ENCODE measurements at regions of chr9 and their contacts with region 1.

Region 1: GRCh38 chr9:9938432-9938831 is 674.4 kb downstream of the PTPRD start:
- DNase-seq: no peak
- H3K4me3 ChIP-seq: no peak overlapping the region
- H3K27ac ChIP-seq: no peak overlapping the region
- H3K4me1 ChIP-seq: peaks cover 0 to 4% (median 0%) of the 10 kb centered on the region in 4 donors
- H3K27me3 ChIP-seq: no peaks in the 10 kb centered on the region
- CTCF ChIP-seq: no peak
- EP300 ChIP-seq: no peak
- POLR2A ChIP-seq: no peak

Region 2: GRCh38 chr9:9605681-9606080 is 332.8 kb before region 1 on chr9:
- intact Hi-C with region 1: loop called (anchors 5 kb)
- DNase-seq: no peak
- H3K4me3 ChIP-seq: no peak overlapping the region
- H3K27ac ChIP-seq: no peak overlapping the region
- H3K4me1 ChIP-seq: no peaks in the 10 kb centered on the region
- H3K27me3 ChIP-seq: no peaks in the 10 kb centered on the region
- CTCF ChIP-seq: no peak
- EP300 ChIP-seq: no peak
- POLR2A ChIP-seq: no peak

Region 3: GRCh38 chr9:9912459-9912858 is 26.0 kb before region 1 on chr9:
- intact Hi-C with region 1: no loop called
- DNase-seq: no peak
- H3K4me3 ChIP-seq: no peak overlapping the region
- H3K27ac ChIP-seq: no peak overlapping the region
- H3K4me1 ChIP-seq: no peaks in the 10 kb centered on the region
- H3K27me3 ChIP-seq: no peaks in the 10 kb centered on the region
- CTCF ChIP-seq: no peak
- EP300 ChIP-seq: no peak
- POLR2A ChIP-seq: no peak

Region 4: DNA sequence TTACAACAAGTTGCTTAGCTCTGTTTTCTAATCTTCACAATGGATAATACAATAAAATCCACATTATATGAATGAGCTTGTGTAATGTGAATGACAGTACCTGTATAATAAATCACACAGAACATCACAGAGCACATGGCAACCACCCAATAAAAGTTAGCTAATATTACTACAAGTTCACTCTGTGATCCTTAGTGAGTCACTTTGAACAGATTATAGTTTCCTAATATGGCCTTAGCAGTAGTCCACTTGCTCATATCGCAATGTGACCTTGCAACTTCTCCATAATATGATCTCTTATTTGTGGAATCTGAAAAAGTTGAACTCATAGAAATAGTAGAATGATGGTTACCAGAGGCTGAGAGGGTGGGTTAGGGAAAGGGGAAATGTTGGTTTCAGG is 313.1 kb after region 1 on chr9:
- intact Hi-C with region 1: no loop called
- DNase-seq: no peak
- H3K4me3 ChIP-seq: no peak overlapping the region
- H3K27ac ChIP-seq: no peak overlapping the region
- H3K4me1 ChIP-seq: no peaks in the 10 kb centered on the region
- H3K27me3 ChIP-seq: no peaks in the 10 kb centered on the region
- CTCF ChIP-seq: no peak
- EP300 ChIP-seq: no peak
- POLR2A ChIP-seq: no peak

Measured in esophagus muscularis mucosa (tissue), 4 donors.